Endothelial cell of umbilical vein (primary cell): ENCODE measurements at regions of chr4 and their contacts with region 1.

Region 1: GRCh38 chr4:105471566-105472176 is 2.2 kb downstream of the PPA2 start:
- DNase-seq: peak; percentile 81
- H3K4me3 ChIP-seq: peak overlapping the region in 1 of 3 experiments; percentile 35
- H3K27ac ChIP-seq: no peak overlapping the region
- H3K4me1 ChIP-seq: peaks cover 18% of the 10 kb centered on the region
- H3K27me3 ChIP-seq: no peaks in the 10 kb centered on the region
- CTCF ChIP-seq: peak; percentile 57 to 70
- POLR2A ChIP-seq: no peak

Region 2: DNA sequence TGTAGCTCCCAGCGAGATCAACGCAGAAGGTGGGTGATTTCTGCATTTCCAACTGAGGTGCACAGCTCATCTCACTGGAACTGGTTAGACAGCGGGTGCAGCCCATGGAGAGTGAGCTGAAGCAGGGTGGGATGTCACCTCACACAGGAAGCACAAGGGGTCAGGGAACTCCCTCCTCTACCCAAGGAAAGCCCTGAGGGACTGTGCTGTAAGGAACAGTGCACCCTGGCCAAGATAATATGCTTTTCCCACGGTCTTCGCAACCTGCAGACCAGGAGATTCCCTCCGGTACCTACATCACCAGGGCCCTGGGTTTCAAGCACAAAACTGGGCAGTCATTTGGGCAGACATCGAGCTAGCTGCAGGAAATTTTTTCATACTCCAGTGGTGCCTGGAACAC is 541.4 kb before region 1 on chr4:
- CTCF ChIA-PET with region 1: no interaction called
- POLR2A ChIA-PET with region 1: no interaction called
- dilution Hi-C with region 1: no loop called
- intact Hi-C with region 1: loop called (anchors 10 kb)
- DNase-seq: no peak
- H3K4me3 ChIP-seq: no peak overlapping the region
- H3K27ac ChIP-seq: no peak overlapping the region
- H3K4me1 ChIP-seq: no peaks in the 10 kb centered on the region
- H3K27me3 ChIP-seq: no peaks in the 10 kb centered on the region
- CTCF ChIP-seq: no peak
- POLR2A ChIP-seq: no peak

Region 3: DNA sequence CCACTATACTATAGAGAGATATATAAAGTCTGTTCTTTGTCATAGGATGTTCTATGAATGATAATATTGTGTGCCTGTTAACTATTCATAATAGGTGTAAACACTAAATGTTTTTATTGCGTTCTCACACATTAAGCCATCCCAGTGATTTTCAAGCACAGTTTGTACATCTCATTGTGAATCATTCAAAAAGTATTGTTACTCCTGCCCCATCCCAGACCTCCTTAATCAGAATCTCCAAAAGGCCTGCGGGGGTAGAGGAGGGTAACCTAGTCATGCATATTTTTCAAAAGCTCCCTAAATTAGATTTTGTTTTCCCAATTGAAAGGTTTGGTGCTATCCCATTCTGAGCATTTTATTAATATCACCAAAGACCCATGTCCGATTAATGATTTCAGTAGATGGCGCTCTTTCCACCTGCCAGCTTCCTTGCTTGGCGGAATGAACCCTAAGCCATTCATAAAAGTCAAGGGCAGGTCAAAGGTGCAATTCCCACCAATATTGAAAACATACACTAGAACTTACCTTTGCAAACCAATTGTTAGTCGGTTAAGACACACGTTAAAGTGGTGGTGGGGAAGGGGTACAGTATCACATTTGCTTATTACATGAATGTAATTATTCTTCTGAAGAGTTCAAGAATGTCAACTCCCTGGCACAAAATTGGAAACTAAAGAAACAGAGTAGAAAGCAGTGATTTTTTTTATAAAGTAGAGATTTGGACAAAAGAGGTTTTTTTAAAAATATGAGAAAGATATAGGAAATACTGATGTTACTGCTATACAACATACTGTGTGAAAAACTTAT is 330.8 kb before region 1 on chr4:
- CTCF ChIA-PET with region 1: interaction called, 48 read pairs
- POLR2A ChIA-PET with region 1: no interaction called
- dilution Hi-C with region 1: no loop called
- intact Hi-C with region 1: loop called (anchors 1 kb)
- DNase-seq: peak; percentile 50
- H3K4me3 ChIP-seq: no peak overlapping the region
- H3K27ac ChIP-seq: no peak overlapping the region
- H3K4me1 ChIP-seq: peaks cover 4% of the 10 kb centered on the region
- H3K27me3 ChIP-seq: no peaks in the 10 kb centered on the region
- CTCF ChIP-seq: peak; percentile 51 to 56
- POLR2A ChIP-seq: no peak

Region 4: DNA sequence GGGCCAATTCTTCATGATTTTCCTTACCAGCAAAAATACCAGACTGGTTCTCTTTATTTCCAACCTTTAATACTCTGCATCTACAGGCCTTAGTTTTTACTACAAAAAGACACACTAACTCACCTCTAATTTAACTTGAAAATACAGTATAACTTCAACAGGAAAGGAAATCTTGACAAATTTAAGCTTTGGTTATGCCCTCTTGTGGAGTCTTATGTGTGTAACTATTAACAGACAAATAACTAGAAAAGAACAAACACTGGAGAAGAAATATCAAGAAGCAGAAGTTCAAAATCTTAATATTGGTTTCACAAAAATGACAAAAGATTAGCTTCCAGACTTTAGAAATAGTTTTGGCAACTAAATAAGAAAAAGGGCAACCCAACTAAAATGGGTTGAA is 30.8 kb before region 1 on chr4:
- CTCF ChIA-PET with region 1: interaction called, 12 read pairs
- POLR2A ChIA-PET with region 1: no interaction called
- dilution Hi-C with region 1: no loop called
- intact Hi-C with region 1: no loop called
- DNase-seq: no peak
- H3K4me3 ChIP-seq: no peak overlapping the region
- H3K27ac ChIP-seq: no peak overlapping the region
- H3K4me1 ChIP-seq: no peaks in the 10 kb centered on the region
- H3K27me3 ChIP-seq: no peaks in the 10 kb centered on the region
- CTCF ChIP-seq: no peak
- POLR2A ChIP-seq: no peak

Region 5: GRCh38 chr4:105461221-105461620 is 10.4 kb before region 1 on chr4:
- CTCF ChIA-PET with region 1: interaction called, 10 read pairs
- POLR2A ChIA-PET with region 1: no interaction called
- dilution Hi-C with region 1: no loop called
- intact Hi-C with region 1: no loop called
- DNase-seq: no peak
- H3K4me3 ChIP-seq: no peak overlapping the region
- H3K27ac ChIP-seq: no peak overlapping the region
- H3K4me1 ChIP-seq: no peaks in the 10 kb centered on the region
- H3K27me3 ChIP-seq: no peaks in the 10 kb centered on the region
- CTCF ChIP-seq: no peak
- POLR2A ChIP-seq: no peak

Region 6: GRCh38 chr4:105483840-105484239 is 12.2 kb after region 1 on chr4:
- CTCF ChIA-PET with region 1: interaction called, 10 read pairs
- POLR2A ChIA-PET with region 1: no interaction called
- dilution Hi-C with region 1: no loop called
- intact Hi-C with region 1: no loop called
- DNase-seq: no peak
- H3K4me3 ChIP-seq: no peak overlapping the region
- H3K27ac ChIP-seq: no peak overlapping the region
- H3K4me1 ChIP-seq: no peaks in the 10 kb centered on the region
- H3K27me3 ChIP-seq: no peaks in the 10 kb centered on the region
- CTCF ChIP-seq: no peak
- POLR2A ChIP-seq: no peak

Region 7: DNA sequence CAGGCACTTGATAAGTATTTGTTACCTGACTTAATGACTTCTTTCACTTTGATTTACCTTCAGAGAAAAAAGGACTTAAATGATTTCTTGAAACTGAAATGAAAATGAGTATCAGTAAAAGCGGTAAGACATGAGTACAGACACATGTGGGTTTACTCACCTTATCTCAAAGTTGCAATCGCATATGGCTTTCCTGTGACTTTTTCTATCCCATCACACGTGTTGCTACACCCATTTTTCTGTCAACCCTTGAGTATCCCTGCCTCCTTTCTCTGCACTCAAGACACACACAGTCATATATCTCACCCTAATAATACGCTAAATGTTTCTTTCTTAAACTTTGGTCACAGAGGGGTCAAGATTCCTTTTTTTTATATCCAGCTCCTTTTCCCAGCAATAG is 69.7 kb after region 1 on chr4:
- CTCF ChIA-PET with region 1: no interaction called
- POLR2A ChIA-PET with region 1: no interaction called
- dilution Hi-C with region 1: no loop called
- intact Hi-C with region 1: no loop called
- DNase-seq: no peak
- H3K4me3 ChIP-seq: no peak overlapping the region
- H3K27ac ChIP-seq: no peak overlapping the region
- H3K4me1 ChIP-seq: no peaks in the 10 kb centered on the region
- H3K27me3 ChIP-seq: peaks cover 0 to 3% of the 10 kb centered on the region in 2 experiments
- CTCF ChIP-seq: no peak
- POLR2A ChIP-seq: no peak

Region 8: DNA sequence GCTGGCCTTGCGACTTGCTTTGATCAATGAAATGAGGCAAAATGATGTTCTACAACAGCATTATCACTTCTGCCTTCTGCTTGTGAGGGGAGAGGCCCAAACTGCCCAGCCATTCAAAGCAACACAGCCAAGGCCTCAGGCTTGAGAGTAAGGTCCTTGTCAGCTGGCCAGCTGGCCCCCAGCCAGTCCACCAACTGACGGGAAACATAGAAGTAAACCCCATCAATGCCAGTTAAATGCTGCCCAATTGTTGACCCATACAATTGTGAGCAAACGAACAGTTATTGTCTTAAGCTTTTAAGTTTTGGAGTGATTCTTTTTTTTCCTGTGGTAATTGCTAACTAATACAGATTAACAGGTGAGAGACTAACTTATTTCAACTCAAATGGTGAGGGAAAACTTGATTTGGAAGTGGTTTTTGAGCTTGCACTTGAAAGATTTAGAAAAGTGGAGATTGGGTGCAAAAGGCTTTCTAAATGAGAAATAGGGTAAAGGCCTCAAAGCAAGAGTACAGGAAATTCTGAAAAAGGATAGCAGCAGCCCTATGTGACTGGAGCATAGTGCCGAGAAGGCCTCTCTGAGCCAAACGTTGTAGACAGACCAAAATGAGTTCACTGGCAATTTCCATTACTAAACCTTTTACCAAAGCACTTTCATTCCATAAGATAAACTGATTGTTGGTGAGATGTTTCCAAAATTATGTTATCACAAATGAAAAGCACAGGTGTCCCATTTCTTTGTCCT is 147.7 kb after region 1 on chr4:
- CTCF ChIA-PET with region 1: no interaction called
- POLR2A ChIA-PET with region 1: no interaction called
- dilution Hi-C with region 1: no loop called
- intact Hi-C with region 1: no loop called
- DNase-seq: peak; percentile 70
- H3K4me3 ChIP-seq: no peak overlapping the region
- H3K27ac ChIP-seq: no peak overlapping the region
- H3K4me1 ChIP-seq: no peaks in the 10 kb centered on the region
- H3K27me3 ChIP-seq: no peaks in the 10 kb centered on the region
- CTCF ChIP-seq: no peak
- POLR2A ChIP-seq: no peak

Region 9: DNA sequence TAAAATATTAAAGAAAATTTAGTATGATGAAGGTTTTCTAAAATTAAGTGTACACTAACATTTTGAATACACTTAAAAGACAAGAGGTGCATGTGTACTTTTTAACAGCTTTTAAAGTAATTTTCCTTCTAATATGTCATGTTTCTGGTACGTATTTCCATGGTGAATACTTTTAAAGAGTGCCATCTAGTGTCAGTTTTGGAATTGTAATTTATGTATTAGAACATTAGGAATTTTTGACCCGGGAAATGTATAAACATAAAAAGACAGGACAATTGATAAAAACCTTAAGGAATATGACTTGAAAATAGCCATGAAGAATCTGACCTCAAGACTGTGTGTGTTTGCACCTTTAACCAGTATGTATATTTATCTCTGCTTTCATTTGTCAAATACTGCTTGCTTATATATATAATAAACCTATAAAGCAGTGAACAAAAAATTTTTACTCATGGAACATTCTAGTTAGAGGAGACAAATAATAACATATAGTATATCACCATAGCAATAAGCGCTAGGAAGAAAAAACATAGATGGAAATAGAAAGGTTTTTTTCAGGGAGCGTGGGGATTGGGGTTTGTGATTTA is 244.1 kb after region 1 on chr4:
- CTCF ChIA-PET with region 1: interaction called, 14 read pairs
- POLR2A ChIA-PET with region 1: no interaction called
- dilution Hi-C with region 1: no loop called
- intact Hi-C with region 1: loop called (anchors 2 kb)
- DNase-seq: peak; percentile 64
- H3K4me3 ChIP-seq: no peak overlapping the region
- H3K27ac ChIP-seq: no peak overlapping the region
- H3K4me1 ChIP-seq: no peaks in the 10 kb centered on the region
- H3K27me3 ChIP-seq: no peaks in the 10 kb centered on the region
- CTCF ChIP-seq: peak; percentile 12 to 27
- POLR2A ChIP-seq: no peak

Region 10: DNA sequence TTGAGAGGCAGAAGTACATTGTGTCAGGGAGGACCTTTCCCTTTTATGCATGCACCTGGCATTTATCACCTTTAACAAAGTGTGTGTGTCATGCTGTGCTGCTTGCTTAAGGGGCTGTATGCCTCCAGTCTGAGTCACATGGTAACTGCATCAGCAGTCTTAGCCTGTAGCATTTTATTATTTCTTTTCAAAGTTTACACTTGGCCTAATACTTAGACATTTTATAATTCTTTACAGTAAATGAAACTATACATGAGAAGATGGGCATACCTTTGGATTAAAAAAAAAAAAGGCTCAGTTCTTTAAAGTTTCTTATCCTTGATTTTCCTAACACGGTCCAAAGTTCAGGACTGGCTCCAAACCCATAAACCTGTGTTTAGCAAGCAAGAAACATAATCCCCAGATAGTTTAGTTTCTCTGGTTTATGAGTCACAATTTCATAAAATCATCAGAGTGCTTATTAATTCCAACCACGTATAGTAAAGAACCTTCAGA is 438.2 kb after region 1 on chr4:
- CTCF ChIA-PET with region 1: no interaction called
- POLR2A ChIA-PET with region 1: no interaction called
- dilution Hi-C with region 1: no loop called
- intact Hi-C with region 1: no loop called
- DNase-seq: no peak
- H3K4me3 ChIP-seq: no peak overlapping the region
- H3K27ac ChIP-seq: no peak overlapping the region
- H3K4me1 ChIP-seq: no peaks in the 10 kb centered on the region
- H3K27me3 ChIP-seq: no peaks in the 10 kb centered on the region
- CTCF ChIP-seq: no peak
- POLR2A ChIP-seq: no peak